Activated CD8-positive, alpha-beta T cell treated with anti-CD3 and anti-CD28 coated beads, Interleukin-2, amount 10 ng/mL, durations not matched to agents 7 days and 5 days (primary cell): ENCODE measurements at regions of chr17 and their contacts with region 1.

Region 1: GRCh38 chr17:50478391-50479381 is at the start of gene RSAD1:
- DNase-seq: peak; percentile 90
- ATAC-seq: peak; percentile 96
- H3K4me3 Mint-ChIP-seq: peak within 1 kb of the TSS; percentile 83
- H3K27ac Mint-ChIP-seq: peak within 1 kb of the TSS; percentile 87
- H3K4me1 Mint-ChIP-seq: peaks cover 18% of the 10 kb centered on the region
- H3K27me3 Mint-ChIP-seq: peaks cover 3% of the 10 kb centered on the region
- total RNA-seq, gene RSAD1: 26.6 to 28.4 TPM

Region 2: DNA sequence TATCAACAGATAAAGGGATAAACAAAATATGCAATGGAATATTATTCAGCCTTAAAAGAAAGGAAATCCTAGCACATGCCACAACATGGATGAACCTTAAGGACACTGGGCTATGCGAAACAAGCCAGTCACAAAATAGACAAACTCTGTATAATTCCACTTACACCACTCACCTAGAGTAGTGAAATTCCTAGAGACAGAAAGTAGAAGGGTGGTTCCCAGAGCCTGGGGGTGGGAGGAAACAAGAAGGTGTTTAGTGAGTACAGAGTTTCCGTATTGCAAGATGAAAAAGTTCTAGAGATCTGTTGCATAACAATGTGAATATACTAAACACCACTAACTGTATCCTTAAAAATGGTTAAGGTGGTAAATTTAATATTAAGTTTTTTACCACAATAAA is 810.8 kb before region 1 on chr17:
- CTCF ChIA-PET with region 1: no interaction called
- POLR2A ChIA-PET with region 1: no interaction called
- DNase-seq: no peak
- ATAC-seq: no peak
- H3K4me3 Mint-ChIP-seq: no peak overlapping the region
- H3K27ac Mint-ChIP-seq: no peak overlapping the region
- H3K4me1 Mint-ChIP-seq: peaks cover 26% of the 10 kb centered on the region
- H3K27me3 Mint-ChIP-seq: no peaks in the 10 kb centered on the region

Region 3: DNA sequence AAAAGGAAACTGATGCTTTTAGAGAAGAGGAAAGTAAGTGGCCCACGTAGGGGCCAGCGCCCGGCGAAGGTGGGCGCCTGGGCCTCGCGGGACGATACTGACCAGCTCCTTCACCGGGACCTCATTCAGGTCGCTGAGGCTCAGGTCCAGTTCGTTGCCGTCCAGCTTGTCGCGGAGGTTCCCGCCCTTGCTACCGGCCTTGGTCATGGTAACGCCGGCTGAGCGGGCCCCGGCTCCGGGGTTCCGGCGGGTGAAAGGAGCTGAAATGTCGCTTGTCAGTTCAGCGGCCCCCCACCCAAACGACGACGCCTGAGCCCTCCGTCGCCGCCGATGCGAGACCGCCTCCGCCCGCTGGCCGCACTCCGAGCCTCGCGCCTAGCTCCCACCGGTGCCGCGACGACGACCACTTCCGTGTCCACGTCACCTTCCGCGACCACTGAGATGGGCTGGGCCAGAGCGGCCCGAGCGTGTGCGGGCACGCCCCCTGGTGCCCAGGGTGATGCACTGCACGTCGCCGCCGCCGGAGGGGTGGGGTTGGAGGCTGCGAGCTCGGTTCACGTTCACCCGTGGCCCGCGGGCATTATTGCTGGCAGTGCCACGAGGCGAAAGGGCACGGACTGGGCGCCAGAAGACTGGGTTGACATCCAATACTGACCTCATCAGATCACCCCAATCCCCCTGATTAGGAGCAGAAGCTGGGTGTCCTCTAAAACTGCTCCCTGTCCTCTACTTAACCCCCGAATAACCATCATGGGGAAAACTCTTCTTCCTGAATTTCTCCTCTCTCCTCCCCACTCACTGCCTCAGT is 81.4 kb before region 1 on chr17 and contains the start of gene LRRC59:
- CTCF ChIA-PET with region 1: interaction called, 15 read pairs
- POLR2A ChIA-PET with region 1: interaction called, 4 read pairs
- DNase-seq: peak; percentile 94
- ATAC-seq: peak; percentile 96
- H3K4me3 Mint-ChIP-seq: peak within 1 kb of the TSS; percentile 93
- H3K27ac Mint-ChIP-seq: peak within 1 kb of the TSS; percentile 94
- H3K4me1 Mint-ChIP-seq: peaks cover 27% of the 10 kb centered on the region
- H3K27me3 Mint-ChIP-seq: no peaks in the 10 kb centered on the region
- total RNA-seq, gene LRRC59: 77.7 to 77.9 TPM

Region 4: GRCh38 chr17:50425682-50426471 is 52.8 kb before region 1 on chr17 and contains the start of gene ACSF2:
- CTCF ChIA-PET with region 1: interaction called, 11 read pairs
- POLR2A ChIA-PET with region 1: interaction called, 3 read pairs
- DNase-seq: peak; percentile 81
- ATAC-seq: peak; percentile 87
- H3K4me3 Mint-ChIP-seq: peak within 1 kb of the TSS; percentile 82
- H3K27ac Mint-ChIP-seq: peak within 1 kb of the TSS; percentile 90
- H3K4me1 Mint-ChIP-seq: peaks cover 37% of the 10 kb centered on the region
- H3K27me3 Mint-ChIP-seq: no peaks in the 10 kb centered on the region
- total RNA-seq, gene ACSF2: 33.1 to 33.4 TPM

Region 5: GRCh38 chr17:50501054-50501453 is 22.4 kb after region 1 on chr17:
- CTCF ChIA-PET with region 1: interaction called, 34 read pairs
- POLR2A ChIA-PET with region 1: no interaction called
- DNase-seq: peak; percentile 47
- ATAC-seq: no peak
- H3K4me3 Mint-ChIP-seq: no peak overlapping the region
- H3K27ac Mint-ChIP-seq: no peak overlapping the region
- H3K4me1 Mint-ChIP-seq: peaks cover 41% of the 10 kb centered on the region
- H3K27me3 Mint-ChIP-seq: peaks cover 2% of the 10 kb centered on the region

Region 6: DNA sequence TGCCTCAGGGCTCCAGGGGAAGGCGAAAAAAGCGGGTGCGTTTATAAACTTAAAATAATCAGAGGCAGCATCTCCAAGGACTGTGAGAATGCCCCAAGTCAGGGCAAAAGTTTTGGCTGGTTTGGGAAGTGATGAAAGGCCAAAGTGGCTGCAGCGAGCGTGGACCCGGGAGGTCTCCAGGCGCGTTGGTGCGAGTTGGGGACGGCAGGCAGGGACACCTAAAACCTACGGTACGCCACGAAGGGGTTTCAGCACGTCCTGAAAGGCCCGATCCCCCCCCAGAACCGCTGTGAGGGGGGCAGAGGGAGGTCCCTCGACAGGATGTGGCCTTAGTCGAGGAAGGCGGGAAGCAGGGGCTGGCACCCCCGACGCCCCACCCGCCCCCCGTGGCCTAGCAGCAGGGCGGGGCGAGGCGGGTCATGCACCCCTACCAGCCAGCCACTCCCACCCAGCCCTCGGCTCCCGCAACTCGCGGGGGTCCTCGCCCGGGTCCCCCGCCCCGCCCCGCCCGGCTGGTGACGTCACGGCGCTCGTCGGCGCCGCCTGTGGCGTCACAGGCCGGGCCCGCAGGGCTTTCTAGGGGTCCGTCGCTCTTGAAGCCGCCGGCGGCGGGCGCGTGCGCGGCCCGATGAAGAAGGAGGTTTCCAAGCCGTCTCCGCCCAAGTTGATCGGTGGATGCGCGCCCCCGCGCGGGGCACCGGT is 29.3 kb after region 1 on chr17 and contains the start of gene MYCBPAP:
- CTCF ChIA-PET with region 1: interaction called, 34 read pairs
- POLR2A ChIA-PET with region 1: no interaction called
- DNase-seq: peak; percentile 90
- ATAC-seq: peak; percentile 79
- H3K4me3 Mint-ChIP-seq: peak within 1 kb of the TSS; percentile 97
- H3K27ac Mint-ChIP-seq: peak within 1 kb of the TSS; percentile 98
- H3K4me1 Mint-ChIP-seq: peaks cover 74% of the 10 kb centered on the region
- H3K27me3 Mint-ChIP-seq: no peaks in the 10 kb centered on the region
- total RNA-seq, gene MYCBPAP: 7.7 to 9.3 TPM

Region 7: GRCh38 chr17:50594128-50594823 is 115.6 kb after region 1 on chr17:
- CTCF ChIA-PET with region 1: no interaction called
- POLR2A ChIA-PET with region 1: no interaction called
- DNase-seq: no peak
- ATAC-seq: no peak
- H3K4me3 Mint-ChIP-seq: no peak overlapping the region
- H3K27ac Mint-ChIP-seq: no peak overlapping the region
- H3K4me1 Mint-ChIP-seq: no peaks in the 10 kb centered on the region
- H3K27me3 Mint-ChIP-seq: no peaks in the 10 kb centered on the region

Region 8: GRCh38 chr17:50626037-50626574 is 147.4 kb after region 1 on chr17:
- CTCF ChIA-PET with region 1: interaction called, 20 read pairs
- POLR2A ChIA-PET with region 1: no interaction called
- DNase-seq: peak; percentile 72
- ATAC-seq: peak; percentile 75
- H3K4me3 Mint-ChIP-seq: no peak overlapping the region
- H3K27ac Mint-ChIP-seq: no peak overlapping the region
- H3K4me1 Mint-ChIP-seq: peaks cover 10% of the 10 kb centered on the region
- H3K27me3 Mint-ChIP-seq: peaks cover 29% of the 10 kb centered on the region